CD8-positive, alpha-beta T cell (primary cell): ENCODE measurements at regions of chr5 and their contacts with region 1.

Region 1: GRCh38 chr5:14664302-14665100 is at the start of gene OTULIN:
- DNase-seq: peak; percentile 62 to 96 (median 85)
- ATAC-seq: peak; percentile 65
- H3K4me3 ChIP-seq: peak within 1 kb of the TSS; percentile 60 to 65
- H3K4me3 Mint-ChIP-seq: peak within 1 kb of the TSS; percentile 95
- H3K27ac ChIP-seq: peak within 1 kb of the TSS; percentile 75 to 89
- H3K27ac Mint-ChIP-seq: peak within 1 kb of the TSS; percentile 97
- H3K4me1 ChIP-seq: peaks cover 50% of the 10 kb centered on the region
- H3K4me1 Mint-ChIP-seq: peaks cover 69% of the 10 kb centered on the region
- H3K27me3 ChIP-seq: no peaks in the 10 kb centered on the region
- H3K27me3 Mint-ChIP-seq: no peaks in the 10 kb centered on the region
- CTCF ChIP-seq: no peak
- total RNA-seq, gene OTULIN: 135 to 140 TPM

Region 2: DNA sequence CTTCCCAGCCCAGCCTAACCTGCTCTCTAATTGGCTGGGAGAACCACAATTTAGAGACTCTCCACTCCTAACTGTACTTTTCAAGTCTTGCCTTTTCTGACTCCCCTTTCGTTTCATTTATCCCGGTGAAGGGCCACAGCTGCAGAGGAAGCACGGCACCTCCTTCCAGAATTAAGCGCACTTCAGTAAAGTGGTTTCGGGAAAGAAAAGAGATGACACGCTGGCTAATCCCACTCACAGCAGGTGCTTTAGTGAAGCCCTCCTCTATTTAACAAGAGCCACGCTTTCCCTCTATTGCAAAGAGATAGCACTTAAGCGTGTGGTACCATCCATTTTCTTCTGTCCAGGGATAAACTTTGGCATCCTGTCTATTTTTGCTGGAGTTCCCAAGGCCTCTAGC is 724.9 kb before region 1 on chr5:
- CTCF ChIA-PET with region 1: no interaction called
- POLR2A ChIA-PET with region 1: no interaction called
- intact Hi-C with region 1: no loop called
- DNase-seq: no peak
- ATAC-seq: no peak
- H3K4me3 ChIP-seq: no peak overlapping the region
- H3K4me3 Mint-ChIP-seq: no peak overlapping the region
- H3K27ac ChIP-seq: no peak overlapping the region
- H3K27ac Mint-ChIP-seq: no peak overlapping the region
- H3K4me1 ChIP-seq: no peaks in the 10 kb centered on the region
- H3K4me1 Mint-ChIP-seq: no peaks in the 10 kb centered on the region
- H3K27me3 ChIP-seq: no peaks in the 10 kb centered on the region
- H3K27me3 Mint-ChIP-seq: no peaks in the 10 kb centered on the region
- CTCF ChIP-seq: no peak

Region 3: DNA sequence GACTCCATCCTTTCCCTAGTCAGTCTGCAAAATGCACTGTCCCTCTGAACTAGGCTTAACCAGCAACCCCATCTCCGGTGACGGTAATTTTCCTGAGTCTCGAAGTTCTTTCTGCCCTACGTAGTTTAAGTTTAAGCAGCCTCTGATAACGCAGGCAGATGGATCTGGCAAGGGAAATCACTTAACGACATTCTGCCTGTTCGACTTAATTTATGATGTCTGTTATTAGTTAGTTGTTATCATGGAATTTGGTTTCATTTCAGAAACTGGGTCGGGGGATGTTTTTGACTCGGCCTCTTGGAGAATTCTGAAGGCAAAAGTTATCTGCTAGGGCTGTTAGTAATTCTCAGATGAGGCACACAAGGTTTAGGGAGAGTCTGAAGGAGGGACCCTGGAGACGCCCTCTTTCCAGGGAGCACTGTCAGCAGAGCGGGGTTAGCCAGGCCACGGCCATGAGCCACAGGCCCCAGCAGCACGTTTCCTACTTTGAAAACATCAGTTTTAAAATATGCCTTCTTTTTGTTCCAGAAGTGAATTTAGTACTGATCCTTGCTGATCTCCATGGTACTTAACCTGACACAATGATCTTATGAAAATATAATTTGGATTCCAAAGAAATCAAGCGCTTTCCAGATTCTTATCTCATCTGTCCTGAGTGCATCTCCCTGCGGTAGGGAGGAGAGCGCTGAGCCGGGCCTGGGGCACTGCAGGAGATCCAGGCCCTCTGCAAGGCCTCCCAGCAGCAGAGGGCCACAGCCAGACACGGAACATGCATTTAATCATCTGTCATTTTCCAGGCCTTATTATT is 253.9 kb before region 1 on chr5:
- CTCF ChIA-PET with region 1: no interaction called
- POLR2A ChIA-PET with region 1: no interaction called
- intact Hi-C with region 1: loop called in 1 of 2 experiments (anchors 5 kb)
- DNase-seq: no peak
- ATAC-seq: no peak
- H3K4me3 ChIP-seq: no peak overlapping the region
- H3K4me3 Mint-ChIP-seq: no peak overlapping the region
- H3K27ac ChIP-seq: no peak overlapping the region
- H3K27ac Mint-ChIP-seq: no peak overlapping the region
- H3K4me1 ChIP-seq: peaks cover 31% of the 10 kb centered on the region
- H3K4me1 Mint-ChIP-seq: peaks cover 35% of the 10 kb centered on the region
- H3K27me3 ChIP-seq: no peaks in the 10 kb centered on the region
- H3K27me3 Mint-ChIP-seq: no peaks in the 10 kb centered on the region
- CTCF ChIP-seq: no peak

Region 4: GRCh38 chr5:14463629-14464028 is 200.9 kb before region 1 on chr5:
- CTCF ChIA-PET with region 1: no interaction called
- POLR2A ChIA-PET with region 1: no interaction called
- intact Hi-C with region 1: no loop called
- DNase-seq: peak in 1 of 9 experiments; percentile 18
- ATAC-seq: no peak
- H3K4me3 ChIP-seq: no peak overlapping the region
- H3K4me3 Mint-ChIP-seq: no peak overlapping the region
- H3K27ac ChIP-seq: no peak overlapping the region
- H3K27ac Mint-ChIP-seq: no peak overlapping the region
- H3K4me1 ChIP-seq: no peaks in the 10 kb centered on the region
- H3K4me1 Mint-ChIP-seq: no peaks in the 10 kb centered on the region
- H3K27me3 ChIP-seq: no peaks in the 10 kb centered on the region
- H3K27me3 Mint-ChIP-seq: no peaks in the 10 kb centered on the region
- CTCF ChIP-seq: no peak

Region 5: DNA sequence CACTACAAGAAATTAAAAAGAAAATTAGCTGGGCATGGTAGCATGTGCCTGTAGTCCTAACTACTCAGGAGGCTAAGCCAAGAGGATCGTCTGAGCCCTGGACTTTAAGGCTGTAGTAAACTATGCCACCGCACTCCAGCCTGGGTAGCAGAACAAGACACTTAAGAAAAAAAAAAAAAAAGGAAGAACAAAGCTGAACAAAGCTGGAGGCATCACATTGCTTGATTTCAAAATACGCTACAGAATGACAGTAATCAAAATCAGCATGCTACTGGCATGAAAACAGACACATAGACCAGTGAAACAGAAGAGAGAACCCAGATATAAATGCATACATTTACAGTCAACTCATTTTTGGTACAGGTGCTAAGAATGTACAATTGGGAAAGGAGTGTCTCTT is 14.4 kb before region 1 on chr5:
- CTCF ChIA-PET with region 1: interaction called, 19 read pairs
- POLR2A ChIA-PET with region 1: no interaction called
- intact Hi-C with region 1: no loop called
- DNase-seq: no peak
- ATAC-seq: no peak
- H3K4me3 ChIP-seq: no peak overlapping the region
- H3K4me3 Mint-ChIP-seq: no peak overlapping the region
- H3K27ac ChIP-seq: no peak overlapping the region
- H3K27ac Mint-ChIP-seq: no peak overlapping the region
- H3K4me1 ChIP-seq: peaks cover 4% of the 10 kb centered on the region
- H3K4me1 Mint-ChIP-seq: peaks cover under 1% of the 10 kb centered on the region
- H3K27me3 ChIP-seq: no peaks in the 10 kb centered on the region
- H3K27me3 Mint-ChIP-seq: peaks cover 7% of the 10 kb centered on the region
- CTCF ChIP-seq: no peak

Region 6: GRCh38 chr5:14706615-14707021 is 42.1 kb after region 1 on chr5:
- CTCF ChIA-PET with region 1: interaction called, 4 read pairs
- POLR2A ChIA-PET with region 1: interaction called, 8 read pairs
- intact Hi-C with region 1: loop called (anchors 2 kb)
- DNase-seq: peak in 8 of 9 experiments; percentile 33 to 83 (median 60)
- ATAC-seq: peak; percentile 94
- H3K4me3 ChIP-seq: no peak overlapping the region
- H3K4me3 Mint-ChIP-seq: peak overlapping the region; percentile 76
- H3K27ac ChIP-seq: peak overlapping the region; percentile 46 to 72
- H3K27ac Mint-ChIP-seq: peak overlapping the region; percentile 99
- H3K4me1 ChIP-seq: peaks cover 79% of the 10 kb centered on the region
- H3K4me1 Mint-ChIP-seq: peaks cover 80% of the 10 kb centered on the region
- H3K27me3 ChIP-seq: no peaks in the 10 kb centered on the region
- H3K27me3 Mint-ChIP-seq: no peaks in the 10 kb centered on the region
- CTCF ChIP-seq: no peak

Region 7: GRCh38 chr5:14996997-14997396 is 332.5 kb after region 1 on chr5:
- CTCF ChIA-PET with region 1: no interaction called
- POLR2A ChIA-PET with region 1: no interaction called
- intact Hi-C with region 1: loop called in 1 of 2 experiments (anchors 5 kb)
- DNase-seq: peak in 1 of 9 experiments; percentile 35
- ATAC-seq: no peak
- H3K4me3 ChIP-seq: no peak overlapping the region
- H3K4me3 Mint-ChIP-seq: no peak overlapping the region
- H3K27ac ChIP-seq: no peak overlapping the region
- H3K27ac Mint-ChIP-seq: no peak overlapping the region
- H3K4me1 ChIP-seq: peaks cover 4% of the 10 kb centered on the region
- H3K4me1 Mint-ChIP-seq: peaks cover 14% of the 10 kb centered on the region
- H3K27me3 ChIP-seq: no peaks in the 10 kb centered on the region
- H3K27me3 Mint-ChIP-seq: no peaks in the 10 kb centered on the region
- CTCF ChIP-seq: no peak